ENCODE measurements at regions of chr3 and their contacts with region 1.

Region 1: DNA sequence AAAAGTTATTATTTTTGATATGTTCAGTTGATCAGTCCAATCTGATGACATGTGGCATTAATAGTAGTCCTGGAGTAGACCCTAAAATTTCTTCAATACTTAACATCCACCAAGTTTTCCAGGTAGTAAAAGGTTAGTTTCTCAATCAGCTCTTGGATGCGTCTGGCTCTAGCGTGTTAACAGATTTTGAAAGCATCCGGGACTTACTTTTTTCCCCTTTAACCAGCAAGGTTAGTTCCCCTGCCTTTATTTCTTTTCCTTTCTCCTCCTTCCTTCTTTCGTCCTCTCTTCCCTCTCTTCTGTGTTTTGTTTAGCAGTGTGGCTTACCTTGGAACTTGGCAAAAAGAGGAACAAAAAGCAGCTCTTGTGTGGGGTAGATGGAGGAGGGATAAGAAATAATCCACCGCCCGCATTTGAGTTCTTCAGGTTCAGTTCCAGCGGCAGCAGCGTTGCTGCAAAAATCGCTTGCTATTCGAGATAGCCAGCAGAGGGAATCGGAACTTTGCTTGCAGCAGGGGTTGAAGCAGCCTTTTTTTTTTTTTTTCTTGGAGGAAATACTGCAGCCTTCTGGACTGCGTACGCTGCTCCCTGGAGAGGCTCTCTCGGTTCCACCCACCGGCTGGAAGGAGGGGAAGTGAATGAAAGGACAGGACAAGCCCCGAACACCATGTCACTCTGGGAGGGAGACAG is at the start of gene RBMS3:
- DNase-seq: peak; percentile 93
- H3K4me3 Mint-ChIP-seq: peak within 1 kb of the TSS; percentile 79
- H3K27ac Mint-ChIP-seq: peak within 1 kb of the TSS; percentile 85
- H3K4me1 Mint-ChIP-seq: peaks cover 25% of the 10 kb centered on the region
- H3K27me3 Mint-ChIP-seq: no peaks in the 10 kb centered on the region
- CTCF ChIP-seq: peak; percentile 42
- total RNA-seq, gene RBMS3: 65.5 and 74.2 TPM in 2 replicates

Region 2: DNA sequence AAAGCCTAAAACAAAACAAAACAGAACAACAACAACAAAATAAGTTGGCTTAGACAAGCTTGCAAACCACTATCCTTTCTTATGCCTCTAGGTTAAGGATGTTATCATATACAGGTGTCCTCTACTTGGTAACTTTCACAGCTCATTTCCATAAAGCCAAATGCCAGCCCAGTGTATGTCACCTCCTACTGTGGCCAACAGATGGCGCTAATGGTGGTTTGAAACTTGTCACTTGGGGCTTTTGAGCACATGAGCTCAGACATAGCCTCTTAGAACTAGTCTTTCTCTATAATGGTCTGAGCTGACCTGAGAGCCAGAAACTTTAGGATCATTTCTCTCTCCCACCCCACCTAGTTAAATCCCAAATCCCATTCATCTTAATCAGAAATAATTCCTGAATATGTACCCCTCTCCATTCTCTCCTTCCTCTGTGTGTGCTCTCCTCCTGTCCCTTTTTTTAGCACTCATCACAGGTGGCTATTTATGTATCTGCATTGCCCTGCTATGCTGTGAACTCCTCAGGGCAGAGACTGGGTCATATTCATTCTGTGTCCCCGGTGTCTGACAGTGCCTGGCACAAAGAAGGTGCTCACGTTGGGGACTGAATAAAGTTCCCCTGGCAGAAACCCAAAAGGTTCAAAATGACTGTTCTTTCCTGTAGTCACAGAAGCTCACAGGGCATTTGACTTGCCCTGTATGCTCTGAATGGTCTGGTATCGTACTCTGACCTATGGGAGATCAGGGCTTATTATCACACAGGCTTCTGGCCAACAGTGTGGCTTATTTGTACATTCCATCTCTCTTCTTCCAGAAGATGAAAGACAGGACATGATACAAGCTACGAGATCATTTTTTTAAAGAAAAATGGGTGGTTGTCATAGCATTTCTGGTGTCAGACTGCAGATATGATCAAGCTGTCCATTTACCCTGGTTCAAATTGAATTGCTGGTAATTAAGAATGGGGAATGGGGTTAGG is 612.6 kb before region 1 on chr3:
- CTCF ChIA-PET with region 1: interaction called, 6 read pairs
- POLR2A ChIA-PET with region 1: interaction called, 3 read pairs
- intact Hi-C with region 1: loop called (anchors 5 kb)
- DNase-seq: peak; percentile 83
- H3K4me3 Mint-ChIP-seq: no peak overlapping the region
- H3K27ac Mint-ChIP-seq: no peak overlapping the region
- H3K4me1 Mint-ChIP-seq: no peaks in the 10 kb centered on the region
- H3K27me3 Mint-ChIP-seq: no peaks in the 10 kb centered on the region
- CTCF ChIP-seq: peak; percentile 80

Region 3: GRCh38 chr3:28972921-28973320 is 307.6 kb before region 1 on chr3:
- CTCF ChIA-PET with region 1: no interaction called
- POLR2A ChIA-PET with region 1: no interaction called
- intact Hi-C with region 1: no loop called
- DNase-seq: peak; percentile 14
- H3K4me3 Mint-ChIP-seq: no peak overlapping the region
- H3K27ac Mint-ChIP-seq: no peak overlapping the region
- H3K4me1 Mint-ChIP-seq: peaks cover 15% of the 10 kb centered on the region
- H3K27me3 Mint-ChIP-seq: no peaks in the 10 kb centered on the region
- CTCF ChIP-seq: no peak

Region 4: DNA sequence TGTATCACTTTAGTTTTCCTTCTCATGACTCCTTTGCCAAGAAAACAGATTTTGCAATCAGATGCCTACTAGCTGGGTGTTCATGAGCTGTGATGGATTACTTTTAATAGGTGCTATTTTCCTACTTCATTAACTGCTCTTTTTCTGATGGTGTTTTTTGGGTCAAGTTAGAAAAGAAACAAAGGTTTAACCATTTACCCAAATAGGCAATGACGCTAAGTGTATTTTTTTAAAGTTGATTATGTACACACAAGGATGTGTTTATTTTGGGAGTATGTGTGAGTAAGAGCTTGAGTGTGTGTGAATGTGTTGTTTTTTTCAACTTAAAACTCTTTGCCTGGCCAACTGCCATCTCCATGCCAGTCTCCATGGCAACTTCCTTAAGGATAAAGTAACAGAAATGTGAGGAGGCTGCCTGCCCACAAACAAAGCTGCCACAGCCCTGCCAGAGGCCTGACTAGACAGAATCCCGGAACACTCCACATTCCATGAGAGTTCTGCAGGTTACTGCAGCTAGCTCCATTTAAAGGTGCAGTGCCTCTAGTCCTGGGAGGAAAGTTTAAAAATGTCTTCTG is 215.3 kb before region 1 on chr3:
- CTCF ChIA-PET with region 1: interaction called, 7 read pairs
- POLR2A ChIA-PET with region 1: interaction called, 28 read pairs
- intact Hi-C with region 1: loop called (anchors 2 kb)
- DNase-seq: peak; percentile 98
- H3K4me3 Mint-ChIP-seq: peak overlapping the region; percentile 49
- H3K27ac Mint-ChIP-seq: peak overlapping the region; percentile 94
- H3K4me1 Mint-ChIP-seq: peaks cover 25% of the 10 kb centered on the region
- H3K27me3 Mint-ChIP-seq: no peaks in the 10 kb centered on the region
- CTCF ChIP-seq: no peak

Region 5: DNA sequence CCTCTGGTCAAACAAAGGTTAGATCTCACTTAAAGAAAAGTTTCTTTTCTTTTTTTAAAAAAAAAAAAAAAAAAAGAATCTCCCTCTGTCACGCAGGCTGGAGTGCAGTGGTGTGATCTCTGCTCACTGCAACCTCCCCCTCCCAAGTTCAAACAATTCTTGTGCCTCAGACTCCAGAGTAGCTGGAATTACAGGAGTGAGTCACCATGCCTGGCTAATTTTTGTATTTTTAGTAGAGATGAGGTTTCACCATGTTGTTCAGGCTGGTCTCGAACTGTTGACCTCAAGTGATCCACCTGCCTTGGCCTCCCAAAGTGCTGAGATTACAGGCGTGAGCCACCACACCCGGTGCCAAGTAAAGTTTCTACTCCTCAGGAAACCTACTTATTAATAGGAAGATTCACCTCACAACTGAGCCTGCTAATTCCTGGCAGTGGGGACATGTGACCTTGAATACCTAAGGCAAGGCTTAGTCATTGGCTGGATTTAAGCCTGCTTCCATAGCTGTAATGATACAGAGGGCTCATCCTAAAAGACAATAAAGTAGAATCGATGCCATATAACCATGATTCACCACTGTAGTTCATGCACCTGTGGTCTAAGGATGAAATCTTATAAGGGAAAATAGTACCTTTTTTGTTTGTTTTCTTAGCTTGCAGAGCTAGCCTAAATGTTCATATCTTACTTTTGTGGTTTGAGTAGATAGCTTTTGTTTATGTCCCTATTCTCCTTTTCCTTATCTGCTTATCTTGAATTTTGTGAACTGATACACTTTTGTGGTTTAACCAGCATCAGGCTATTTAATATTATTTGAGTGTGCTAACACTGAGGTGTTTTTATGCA is 24.5 kb before region 1 on chr3:
- CTCF ChIA-PET with region 1: interaction called, 9 read pairs
- POLR2A ChIA-PET with region 1: interaction called, 16 read pairs
- intact Hi-C with region 1: no loop called
- DNase-seq: no peak
- H3K4me3 Mint-ChIP-seq: no peak overlapping the region
- H3K27ac Mint-ChIP-seq: no peak overlapping the region
- H3K4me1 Mint-ChIP-seq: peaks cover 9% of the 10 kb centered on the region
- H3K27me3 Mint-ChIP-seq: no peaks in the 10 kb centered on the region
- CTCF ChIP-seq: no peak

Region 6: GRCh38 chr3:29335438-29335837 is 54.9 kb after region 1 on chr3:
- CTCF ChIA-PET with region 1: interaction called, 6 read pairs
- POLR2A ChIA-PET with region 1: interaction called, 184 read pairs
- intact Hi-C with region 1: loop called (anchors 5 kb)
- DNase-seq: peak; percentile 95
- H3K4me3 Mint-ChIP-seq: peak overlapping the region; percentile 74
- H3K27ac Mint-ChIP-seq: peak overlapping the region; percentile 98
- H3K4me1 Mint-ChIP-seq: peaks cover 32% of the 10 kb centered on the region
- H3K27me3 Mint-ChIP-seq: no peaks in the 10 kb centered on the region
- CTCF ChIP-seq: no peak

Region 7: DNA sequence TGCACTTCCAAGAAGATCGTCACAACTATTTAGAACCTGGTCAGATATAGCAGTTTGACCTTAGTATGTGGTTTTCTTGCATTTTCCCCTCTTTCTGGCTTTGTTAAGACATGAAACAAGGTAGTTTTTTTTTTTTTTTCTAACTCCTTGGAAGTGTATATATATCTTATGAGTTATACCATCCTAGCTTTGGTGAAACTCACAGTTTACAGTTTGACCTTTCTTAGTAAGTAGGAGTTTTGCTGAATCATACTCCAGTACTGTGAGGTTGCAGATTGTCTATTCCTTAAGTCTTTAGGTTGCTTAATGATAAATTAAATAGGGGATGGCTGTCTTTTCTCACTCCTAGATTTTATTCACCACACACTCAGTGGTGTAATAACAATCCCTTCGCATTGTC is 325.3 kb after region 1 on chr3:
- CTCF ChIA-PET with region 1: no interaction called
- POLR2A ChIA-PET with region 1: no interaction called
- intact Hi-C with region 1: no loop called
- DNase-seq: peak; percentile 34
- H3K4me3 Mint-ChIP-seq: no peak overlapping the region
- H3K27ac Mint-ChIP-seq: no peak overlapping the region
- H3K4me1 Mint-ChIP-seq: peaks cover 5% of the 10 kb centered on the region
- H3K27me3 Mint-ChIP-seq: no peaks in the 10 kb centered on the region
- CTCF ChIP-seq: no peak

Region 8: DNA sequence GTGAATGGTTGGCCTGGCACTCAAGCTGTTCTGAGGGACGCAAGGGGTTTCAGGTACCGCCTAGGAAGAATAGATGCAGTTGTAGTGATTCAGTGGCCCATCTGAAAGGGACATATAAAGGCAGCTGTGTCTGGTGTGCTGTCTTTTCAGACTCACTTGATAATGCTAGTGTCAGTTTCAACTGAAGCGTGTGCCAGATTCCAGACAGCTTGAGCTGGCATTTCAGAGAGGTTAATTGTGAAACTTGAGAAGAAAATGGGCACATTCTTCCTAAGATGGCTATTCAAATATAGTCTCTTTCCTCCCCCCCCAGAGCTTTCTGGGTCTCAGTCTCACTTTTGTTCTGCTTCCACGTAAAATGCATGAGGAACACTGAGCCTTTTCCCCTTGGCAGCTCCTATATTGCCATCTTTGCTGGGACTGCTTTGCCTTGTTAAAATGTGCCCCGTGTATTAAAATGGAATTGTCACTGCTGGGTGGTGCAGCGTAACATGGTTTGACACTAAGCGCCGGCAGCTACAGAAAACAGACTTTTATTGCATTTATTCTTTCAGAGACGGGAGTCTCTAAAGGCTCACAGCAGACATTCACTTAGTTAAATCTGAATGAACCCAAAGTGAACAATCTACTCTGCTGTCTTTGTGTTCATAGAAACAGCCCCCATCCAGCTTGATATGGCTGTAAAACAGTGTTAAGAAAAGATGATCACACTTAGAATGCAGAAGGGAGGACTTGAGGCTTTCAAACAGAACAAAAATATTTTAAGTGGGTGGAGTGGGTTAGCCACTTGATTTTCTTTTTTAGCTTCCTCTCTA is 479.1 kb after region 1 on chr3:
- CTCF ChIA-PET with region 1: interaction called, 14 read pairs
- POLR2A ChIA-PET with region 1: interaction called, 144 read pairs
- intact Hi-C with region 1: loop called (anchors 1 kb)
- DNase-seq: peak; percentile 90
- H3K4me3 Mint-ChIP-seq: peak overlapping the region; percentile 57
- H3K27ac Mint-ChIP-seq: peak overlapping the region; percentile 95
- H3K4me1 Mint-ChIP-seq: peaks cover 41% of the 10 kb centered on the region
- H3K27me3 Mint-ChIP-seq: no peaks in the 10 kb centered on the region
- CTCF ChIP-seq: no peak

Region 9: GRCh38 chr3:30751610-30752299 is 1471.2 kb after region 1 on chr3:
- CTCF ChIA-PET with region 1: no interaction called
- POLR2A ChIA-PET with region 1: no interaction called
- intact Hi-C with region 1: loop called (anchors 10 kb)
- DNase-seq: peak; percentile 52
- H3K4me3 Mint-ChIP-seq: no peak overlapping the region
- H3K27ac Mint-ChIP-seq: no peak overlapping the region
- H3K4me1 Mint-ChIP-seq: peaks cover 6% of the 10 kb centered on the region
- H3K27me3 Mint-ChIP-seq: no peaks in the 10 kb centered on the region
- CTCF ChIP-seq: no peak